Heart left ventricle (tissue), 16 donors: ENCODE measurements at regions of chr20 and their contacts with region 1.

Region 1: DNA sequence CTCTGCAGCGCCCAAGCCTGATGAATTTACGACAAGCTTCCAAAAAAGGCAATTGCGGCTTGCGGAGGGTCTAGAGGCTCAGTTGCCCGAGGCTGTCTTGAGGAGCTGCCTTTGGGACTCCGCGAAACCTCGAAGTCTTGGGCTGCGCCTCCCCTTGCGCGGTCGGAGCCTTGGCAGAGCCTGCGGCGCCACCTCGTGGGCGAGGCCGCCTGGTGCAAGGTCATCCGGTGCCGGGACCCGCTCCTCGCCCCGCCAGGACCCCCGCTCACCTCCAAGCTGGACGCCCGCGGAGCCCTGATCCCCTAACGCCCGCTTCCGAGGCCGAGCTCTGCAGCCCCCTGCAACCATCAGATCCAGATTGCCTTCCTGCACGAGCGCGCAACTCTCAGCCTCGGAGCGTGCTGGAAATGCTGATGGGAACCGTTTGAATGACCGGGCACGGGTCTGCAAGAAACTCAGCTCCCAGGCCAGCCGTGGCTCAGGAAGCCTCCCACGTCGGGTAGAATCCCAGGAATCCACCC is 14.9 kb upstream of the FAM210B start:
- DNase-seq: peak in 4 of 5 donors; percentile 15 to 37 (median 32)
- ATAC-seq: peak in 3 of 4 donors; percentile 54 to 71 (median 70)
- H3K4me3 ChIP-seq: peak overlapping the region in 1 of 12 donors; percentile 22
- H3K27ac ChIP-seq: no peak overlapping the region
- H3K4me1 ChIP-seq: peaks cover 0 to 8% (median 1%) of the 10 kb centered on the region in 12 donors
- H3K27me3 ChIP-seq: peaks cover 4 to 69% (median 23%) of the 10 kb centered on the region in 9 donors
- CTCF ChIP-seq: peak; percentile 37 to 67 (median 54)
- POLR2A ChIP-seq: no peak

Region 2: GRCh38 chr20:56187534-56188198 is 156.3 kb before region 1 on chr20:
- intact Hi-C with region 1: loop called in 1 of 10 experiments (anchors 10 kb)
- DNase-seq: no peak
- ATAC-seq: no peak
- H3K4me3 ChIP-seq: no peak overlapping the region
- H3K27ac ChIP-seq: no peak overlapping the region
- H3K4me1 ChIP-seq: no peaks in the 10 kb centered on the region
- H3K27me3 ChIP-seq: no peaks in the 10 kb centered on the region
- CTCF ChIP-seq: peak in 7 of 12 donors; percentile 17 to 35 (median 28)
- POLR2A ChIP-seq: no peak

Region 3: DNA sequence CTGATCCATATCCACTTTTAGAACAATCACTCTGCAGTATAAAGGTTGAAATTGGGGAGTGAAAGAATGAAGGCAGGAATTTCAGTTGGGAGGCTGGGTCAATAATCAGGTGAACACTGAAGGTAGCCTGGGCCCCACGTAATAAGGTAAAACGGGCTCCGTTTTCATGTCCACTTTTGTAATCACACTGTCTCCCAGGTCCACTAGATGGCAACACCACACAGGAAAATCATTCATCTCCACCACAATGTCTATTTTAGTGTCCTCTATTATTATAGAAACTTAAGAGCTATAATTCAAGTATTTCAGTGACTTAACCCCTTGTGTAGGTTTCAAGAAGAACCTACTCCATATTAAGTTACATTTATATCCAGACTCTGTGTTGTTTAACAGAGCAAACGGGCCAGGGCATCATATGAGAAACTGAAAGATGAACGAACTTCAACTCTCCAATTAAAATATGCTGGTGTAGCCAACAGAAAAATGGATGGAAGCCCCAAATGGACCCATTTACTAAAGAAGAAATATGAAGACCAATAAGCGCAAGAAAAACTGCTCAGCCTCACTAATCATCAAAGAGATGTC is 141.3 kb before region 1 on chr20:
- intact Hi-C with region 1: loop called in 2 of 10 experiments (anchors 10 kb)
- DNase-seq: no peak
- ATAC-seq: no peak
- H3K4me3 ChIP-seq: no peak overlapping the region
- H3K27ac ChIP-seq: no peak overlapping the region
- H3K4me1 ChIP-seq: no peaks in the 10 kb centered on the region
- H3K27me3 ChIP-seq: peaks cover 0 to 18% (median 0%) of the 10 kb centered on the region in 9 donors
- CTCF ChIP-seq: peak in 10 of 12 donors; percentile 11 to 50 (median 32)
- POLR2A ChIP-seq: no peak